Activated naive CD4-positive, alpha-beta T cell treated with anti-CD3 and anti-CD28 coated beads, Interleukin-2, amount 10 ng/mL, durations not matched to agents 7 days and 5 days (primary cell): ENCODE measurements at regions of chr15 and their contacts with region 1.

Region 1: GRCh38 chr15:68829068-68829467 is 8.4 kb upstream of the ANP32A start:
- DNase-seq: peak; percentile 41
- H3K4me3 Mint-ChIP-seq: no peak overlapping the region
- H3K27ac Mint-ChIP-seq: no peak overlapping the region
- H3K4me1 Mint-ChIP-seq: peaks cover 22% of the 10 kb centered on the region
- H3K27me3 Mint-ChIP-seq: peaks cover 17% of the 10 kb centered on the region

Region 2: GRCh38 chr15:68783226-68784058 is 45.6 kb before region 1 on chr15:
- CTCF ChIA-PET with region 1: interaction called, 50 read pairs
- DNase-seq: peak; percentile 78
- H3K4me3 Mint-ChIP-seq: no peak overlapping the region
- H3K27ac Mint-ChIP-seq: peak overlapping the region; percentile 59
- H3K4me1 Mint-ChIP-seq: peaks cover 36% of the 10 kb centered on the region
- H3K27me3 Mint-ChIP-seq: no peaks in the 10 kb centered on the region

Region 3: GRCh38 chr15:68972201-68973065 is 143.4 kb after region 1 on chr15:
- CTCF ChIA-PET with region 1: no interaction called
- DNase-seq: no peak
- H3K4me3 Mint-ChIP-seq: no peak overlapping the region
- H3K27ac Mint-ChIP-seq: no peak overlapping the region
- H3K4me1 Mint-ChIP-seq: no peaks in the 10 kb centered on the region
- H3K27me3 Mint-ChIP-seq: peaks cover 9% of the 10 kb centered on the region

Region 4: DNA sequence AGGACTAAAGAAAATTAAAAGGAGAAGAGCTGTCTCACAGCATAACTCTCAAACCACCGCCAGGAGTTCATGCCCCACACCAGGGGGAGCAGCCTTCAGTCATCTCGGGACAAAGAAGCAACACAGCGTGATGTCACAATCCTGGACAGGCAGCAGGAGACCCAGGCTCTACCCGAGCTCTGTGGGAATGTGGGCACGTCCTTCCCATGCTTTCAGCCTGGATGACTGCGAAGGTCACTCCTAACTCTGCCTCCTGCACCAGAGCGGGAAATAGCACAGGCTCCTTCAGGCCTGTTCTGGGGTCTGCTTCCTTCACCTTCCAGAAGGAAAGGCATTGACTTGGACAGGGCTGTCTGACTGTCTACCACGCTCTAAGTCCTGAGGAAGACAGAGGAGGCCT is 216.7 kb after region 1 on chr15:
- CTCF ChIA-PET with region 1: no interaction called
- DNase-seq: no peak
- H3K4me3 Mint-ChIP-seq: no peak overlapping the region
- H3K27ac Mint-ChIP-seq: no peak overlapping the region
- H3K4me1 Mint-ChIP-seq: no peaks in the 10 kb centered on the region
- H3K27me3 Mint-ChIP-seq: peaks cover 19% of the 10 kb centered on the region